CD8-positive, alpha-beta T cell (primary cell): ENCODE measurements at regions of chrX and their contacts with region 1.

Region 1: GRCh38 chrX:33447285-33447684 is 235.9 kb upstream of the DMD start:
- DNase-seq: no peak
- ATAC-seq: no peak
- H3K4me3 ChIP-seq: no peak overlapping the region
- H3K4me3 Mint-ChIP-seq: no peak overlapping the region
- H3K27ac ChIP-seq: no peak overlapping the region
- H3K27ac Mint-ChIP-seq: no peak overlapping the region
- H3K4me1 ChIP-seq: no peaks in the 10 kb centered on the region
- H3K4me1 Mint-ChIP-seq: no peaks in the 10 kb centered on the region
- H3K27me3 ChIP-seq: no peaks in the 10 kb centered on the region
- H3K27me3 Mint-ChIP-seq: no peaks in the 10 kb centered on the region
- CTCF ChIP-seq: no peak

Region 2: GRCh38 chrX:33416273-33416805 is 30.9 kb before region 1 on chrX:
- CTCF ChIA-PET with region 1: no interaction called
- POLR2A ChIA-PET with region 1: no interaction called
- intact Hi-C with region 1: loop called in 1 of 2 experiments (anchors 2 kb)
- DNase-seq: no peak
- ATAC-seq: no peak
- H3K4me3 ChIP-seq: no peak overlapping the region
- H3K4me3 Mint-ChIP-seq: no peak overlapping the region
- H3K27ac ChIP-seq: no peak overlapping the region
- H3K27ac Mint-ChIP-seq: no peak overlapping the region
- H3K4me1 ChIP-seq: no peaks in the 10 kb centered on the region
- H3K4me1 Mint-ChIP-seq: no peaks in the 10 kb centered on the region
- H3K27me3 ChIP-seq: no peaks in the 10 kb centered on the region
- H3K27me3 Mint-ChIP-seq: no peaks in the 10 kb centered on the region
- CTCF ChIP-seq: no peak